Left cardiac atrium (tissue), 4 donors: ENCODE measurements at regions of chrX and their contacts with region 1.

Region 1: DNA sequence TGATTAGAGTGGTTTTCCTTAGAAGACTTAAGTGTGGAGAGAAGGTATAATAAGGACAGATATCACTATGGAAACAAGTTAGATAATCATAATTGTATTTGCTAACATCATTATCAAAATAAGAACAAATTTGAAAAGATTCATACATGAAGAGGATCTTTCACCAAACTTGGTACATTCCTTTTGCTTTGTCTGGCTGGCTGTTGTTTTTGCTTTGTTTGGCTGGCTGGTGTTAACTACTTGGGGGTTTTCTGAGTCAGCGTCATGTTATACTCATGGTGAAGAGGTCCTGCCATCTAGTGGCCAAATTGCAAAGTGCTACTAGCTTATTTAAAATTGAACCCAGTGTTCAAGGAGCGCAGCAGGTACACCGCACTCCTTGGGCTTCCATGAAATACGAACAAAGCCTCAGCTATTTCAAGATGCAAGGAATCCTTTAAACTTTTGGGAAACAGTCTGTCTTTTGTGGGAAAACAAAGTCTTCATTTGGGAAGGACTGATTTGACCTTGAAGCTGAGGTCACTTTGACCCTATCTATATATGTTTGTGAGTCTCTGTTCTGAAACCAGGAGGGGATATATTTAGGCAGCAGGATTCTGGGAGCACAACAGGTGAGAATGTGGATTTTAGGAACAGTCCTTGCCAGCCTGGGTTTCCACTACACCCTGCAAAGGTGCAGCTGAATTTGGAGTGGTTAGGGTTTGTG is 129.7 kb downstream of the PLS3 start:
- DNase-seq: peak; percentile 44
- ATAC-seq: peak; percentile 77 to 84

Region 2: DNA sequence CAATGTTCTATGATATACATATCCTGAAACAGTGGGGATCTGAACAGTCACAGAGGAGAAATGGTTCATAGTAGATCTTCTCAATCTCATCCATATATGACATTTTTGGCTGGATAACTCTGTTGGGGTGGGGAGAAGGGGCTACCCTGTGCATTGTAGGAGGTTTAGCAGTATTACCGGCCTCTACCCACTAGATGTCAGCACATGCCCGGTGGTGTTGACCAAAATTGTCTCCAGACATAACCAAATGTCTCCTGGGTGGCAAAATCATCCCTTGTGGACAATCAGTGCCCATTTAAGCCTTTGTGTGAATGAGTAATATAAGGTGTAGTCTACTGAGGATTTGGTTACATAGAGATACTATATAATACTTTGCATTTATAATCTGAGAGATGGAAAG is 39.7 kb before region 1 on chrX:
- intact Hi-C with region 1: loop called in 1 of 2 experiments (anchors 2 kb)
- DNase-seq: no peak
- ATAC-seq: peak; percentile 54 to 79

Region 3: DNA sequence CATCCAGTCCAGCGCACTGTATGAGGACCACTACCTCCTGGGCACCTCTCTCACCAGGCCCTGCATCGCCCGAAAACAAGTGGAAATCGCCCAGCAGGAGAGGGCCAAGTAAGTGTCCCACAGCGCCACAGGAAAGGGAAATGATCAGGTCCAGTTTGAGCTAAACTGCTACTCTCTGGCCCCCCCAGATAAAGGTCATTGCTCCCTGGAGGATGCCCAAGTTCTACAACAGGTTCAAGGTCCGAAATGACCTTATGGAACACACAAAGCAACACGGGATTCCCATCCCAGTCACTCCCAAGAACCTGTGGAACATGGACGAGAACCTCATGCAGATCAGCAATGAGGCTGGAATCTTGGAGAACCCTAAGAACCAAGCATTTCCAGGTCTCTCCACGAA is 25.5 kb before region 1 on chrX:
- intact Hi-C with region 1: no loop called
- DNase-seq: no peak
- ATAC-seq: no peak